ENCODE measurements at regions of chr4 and their contacts with region 1.

Region 1: DNA sequence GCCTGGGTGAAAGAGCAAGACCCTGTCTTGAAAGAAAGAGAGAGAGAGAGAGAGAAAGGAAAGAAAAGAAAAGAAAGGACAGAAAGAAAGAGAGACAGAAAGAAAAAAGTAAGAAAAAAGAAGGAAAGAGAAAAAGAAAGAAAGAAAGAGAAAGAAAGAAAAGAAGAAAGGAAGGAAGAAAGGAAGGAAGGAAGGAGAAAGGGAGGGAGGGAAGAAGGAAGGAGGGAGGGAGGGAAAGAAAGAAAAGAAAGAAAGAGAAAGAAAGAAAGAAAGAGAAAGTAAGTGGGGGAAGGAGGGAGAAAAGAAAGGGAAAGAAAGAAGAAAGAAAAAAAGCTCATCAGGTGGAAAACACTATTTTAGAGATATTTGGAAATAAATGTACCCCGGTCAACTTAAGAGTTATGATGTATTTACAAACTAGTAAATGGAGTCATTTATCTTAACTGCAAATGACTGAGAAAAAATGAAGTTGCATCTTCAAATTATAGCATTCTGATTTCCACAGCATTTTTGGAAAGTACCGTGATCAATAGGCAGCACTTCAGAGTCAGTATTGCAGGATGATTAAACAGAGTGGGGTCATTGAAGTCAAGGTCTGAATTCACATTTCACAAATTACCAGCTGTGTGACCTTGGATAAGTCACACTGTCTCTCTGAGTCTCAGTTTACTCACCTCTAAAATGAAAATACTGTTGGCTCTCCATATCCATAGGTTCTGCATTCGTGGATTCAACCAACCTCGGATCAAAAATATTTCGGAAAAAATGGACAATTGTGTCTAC is 64.1 kb upstream of the SMAD1 start:
- DNase-seq: no peak
- H3K4me3 ChIP-seq: no peak overlapping the region
- H3K27ac ChIP-seq: no peak overlapping the region
- H3K4me1 ChIP-seq: no peaks in the 10 kb centered on the region
- H3K27me3 ChIP-seq: no peaks in the 10 kb centered on the region
- CTCF ChIP-seq: no peak

Region 2: GRCh38 chr4:145380123-145380522 is 37.4 kb before region 1 on chr4:
- CTCF ChIA-PET with region 1: interaction called, 10 read pairs
- POLR2A ChIA-PET with region 1: no interaction called
- intact Hi-C with region 1: no loop called
- DNase-seq: no peak
- H3K4me3 ChIP-seq: no peak overlapping the region
- H3K27ac ChIP-seq: no peak overlapping the region
- H3K4me1 ChIP-seq: no peaks in the 10 kb centered on the region
- H3K27me3 ChIP-seq: no peaks in the 10 kb centered on the region
- CTCF ChIP-seq: no peak

Region 3: DNA sequence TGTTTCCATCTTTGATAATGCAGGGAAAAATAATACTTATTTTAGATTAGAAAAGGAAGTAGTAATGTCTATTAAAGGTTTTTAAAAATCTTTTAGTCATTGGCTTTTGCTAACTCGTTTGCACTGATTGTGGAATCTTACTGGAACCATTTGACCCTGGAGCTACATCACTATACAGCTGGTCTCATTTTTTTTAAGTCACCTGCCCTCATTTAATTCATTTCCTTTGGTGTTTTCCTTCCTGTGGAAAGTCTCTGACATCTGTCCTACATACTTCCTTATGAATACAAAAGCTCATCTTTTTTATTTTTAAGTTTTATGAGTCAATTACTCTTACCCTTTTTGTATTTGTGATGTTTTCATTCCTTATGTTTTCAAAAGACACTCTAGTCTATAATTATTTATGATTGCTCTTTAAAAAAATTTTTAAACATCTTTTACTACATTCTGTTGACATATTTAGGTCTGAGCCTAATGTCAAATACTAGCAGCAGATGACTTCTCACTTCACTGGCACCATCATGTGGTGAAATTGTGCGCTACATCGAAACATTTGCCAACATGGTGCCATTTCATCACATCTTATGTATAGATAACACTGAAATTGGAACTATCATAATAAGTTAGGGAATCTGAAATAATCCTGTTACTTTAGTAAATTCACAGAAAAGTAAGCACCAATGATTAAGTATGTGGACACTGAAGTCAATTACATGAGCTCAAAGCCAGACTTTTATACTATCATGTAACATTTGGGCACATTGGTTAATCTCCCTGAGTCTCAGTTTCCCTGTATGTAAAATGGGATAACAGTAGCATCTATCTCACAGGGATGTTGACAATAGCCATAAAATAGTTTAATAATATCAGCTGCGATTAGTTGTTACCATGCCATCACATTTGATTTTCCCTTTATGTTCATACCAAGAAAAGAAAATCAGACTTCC is 192.2 kb after region 1 on chr4:
- CTCF ChIA-PET with region 1: no interaction called
- POLR2A ChIA-PET with region 1: no interaction called
- intact Hi-C with region 1: no loop called
- DNase-seq: peak; percentile 44 to 64
- H3K4me3 ChIP-seq: no peak overlapping the region
- H3K27ac ChIP-seq: no peak overlapping the region
- H3K4me1 ChIP-seq: no peaks in the 10 kb centered on the region
- H3K27me3 ChIP-seq: no peaks in the 10 kb centered on the region
- CTCF ChIP-seq: peak; percentile 80